A673 (cell line): ENCODE measurements at regions of chr6 and their contacts with region 1.

Region 1: DNA sequence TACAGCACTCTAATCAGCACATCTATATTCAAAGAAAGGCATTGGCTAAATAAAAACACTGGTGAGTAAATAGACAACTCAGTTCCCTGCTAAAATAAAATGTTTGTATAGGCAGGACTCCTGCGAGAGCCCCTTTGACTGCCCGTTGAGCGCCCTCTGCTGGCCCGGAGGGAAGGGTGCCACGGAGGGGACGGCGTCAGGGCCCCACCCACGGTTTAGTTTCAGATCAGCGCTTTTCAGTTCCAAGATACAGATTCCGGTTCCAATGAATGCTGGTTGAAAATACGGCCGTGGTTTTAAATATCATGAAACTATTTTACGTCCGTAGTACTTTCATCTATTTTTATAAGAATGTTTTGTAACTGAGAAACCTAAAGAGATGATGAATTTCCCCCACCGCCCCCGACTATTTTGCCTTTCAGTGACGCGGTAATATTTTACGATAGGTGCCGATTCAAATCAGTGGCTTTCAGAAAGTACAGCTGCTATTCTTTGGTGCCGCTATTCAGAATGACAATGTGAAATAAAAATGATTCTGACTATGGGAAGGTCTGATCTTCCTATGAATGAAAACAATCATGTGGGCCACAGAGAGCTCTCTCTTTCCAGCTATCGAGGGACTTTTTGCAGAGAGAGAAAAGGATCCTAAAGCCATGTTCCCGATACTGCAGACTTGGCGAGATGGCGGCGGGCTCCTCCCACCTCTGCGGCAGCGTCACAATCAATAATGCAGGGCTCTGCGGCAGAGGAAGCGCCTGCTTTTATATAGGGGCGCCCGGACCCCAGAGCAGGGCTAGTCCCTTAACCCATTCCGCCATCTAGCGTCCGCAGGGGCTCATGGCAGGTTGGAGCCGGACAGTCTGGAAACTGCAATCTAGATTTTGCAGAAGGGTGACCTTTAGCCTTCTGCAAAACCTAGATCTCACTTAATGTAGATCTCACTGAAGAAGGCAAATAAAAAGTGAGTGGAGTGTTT is 10.6 kb upstream of the CCN6 start:
- DNase-seq: peak; percentile 97
- H3K4me3 ChIP-seq: peak overlapping the region; percentile 63
- H3K27ac ChIP-seq: peak overlapping the region; percentile 84
- H3K4me1 ChIP-seq: no peaks in the 10 kb centered on the region
- H3K27me3 ChIP-seq: no peaks in the 10 kb centered on the region
- CTCF ChIP-seq: peak; percentile 97

Region 2: DNA sequence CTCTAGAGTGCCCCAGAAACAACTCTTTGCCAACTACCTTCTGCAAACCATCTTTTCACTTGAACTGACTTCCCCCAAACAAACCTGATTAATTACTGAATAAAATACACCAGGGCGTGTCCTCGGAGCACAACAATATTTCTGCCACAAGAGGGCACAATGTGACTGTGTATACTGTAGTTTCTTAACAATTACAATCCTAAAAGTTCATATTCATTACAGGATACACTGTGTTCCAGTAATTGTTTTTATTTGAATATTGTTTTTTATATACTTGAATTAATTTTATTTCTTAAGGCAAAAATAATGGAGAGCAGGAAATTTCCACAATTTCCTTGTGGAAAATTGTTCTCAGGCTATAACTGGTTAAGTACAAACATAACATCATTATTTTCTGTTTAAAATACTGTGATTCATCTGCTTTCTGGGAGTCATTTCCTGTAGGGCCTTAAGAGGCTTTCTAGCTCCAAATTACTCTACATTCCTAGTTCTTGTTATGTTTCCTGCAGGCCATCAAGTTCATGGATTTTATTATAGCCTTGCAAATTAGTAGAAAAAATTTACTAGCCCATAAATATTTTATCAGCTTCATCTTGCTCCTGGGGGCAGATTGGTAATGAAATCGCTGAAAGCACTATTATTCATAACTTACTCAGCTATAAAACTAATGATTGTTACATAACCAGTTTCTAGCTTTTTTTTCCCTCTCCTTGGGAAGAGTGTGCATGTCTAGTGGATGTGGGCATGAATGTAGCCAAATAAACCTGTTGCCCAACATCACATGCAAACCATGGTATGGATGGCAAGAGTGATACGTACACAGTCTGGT is 1515.0 kb before region 1 on chr6:
- CTCF ChIA-PET with region 1: no interaction called
- POLR2A ChIA-PET with region 1: no interaction called
- intact Hi-C with region 1: loop called (anchors 5 kb)
- DNase-seq: peak; percentile 95
- H3K4me3 ChIP-seq: no peak overlapping the region
- H3K27ac ChIP-seq: peak overlapping the region; percentile 3
- H3K4me1 ChIP-seq: peaks cover 21% of the 10 kb centered on the region
- H3K27me3 ChIP-seq: peaks cover 27% of the 10 kb centered on the region
- CTCF ChIP-seq: peak; percentile 93

Region 3: GRCh38 chr6:111259089-111259831 is 784.1 kb before region 1 on chr6:
- CTCF ChIA-PET with region 1: interaction called, 12 read pairs
- POLR2A ChIA-PET with region 1: no interaction called
- intact Hi-C with region 1: loop called (anchors 1 kb)
- DNase-seq: peak; percentile 99
- H3K4me3 ChIP-seq: peak overlapping the region; percentile 84
- H3K27ac ChIP-seq: peak overlapping the region; percentile 75
- H3K4me1 ChIP-seq: no peaks in the 10 kb centered on the region
- H3K27me3 ChIP-seq: no peaks in the 10 kb centered on the region
- CTCF ChIP-seq: peak; percentile 97

Region 4: GRCh38 chr6:111709615-111710398 is 333.5 kb before region 1 on chr6:
- CTCF ChIA-PET with region 1: interaction called, 8 read pairs
- POLR2A ChIA-PET with region 1: no interaction called
- intact Hi-C with region 1: loop called (anchors 1 kb)
- DNase-seq: peak; percentile 84
- H3K4me3 ChIP-seq: no peak overlapping the region
- H3K27ac ChIP-seq: no peak overlapping the region
- H3K4me1 ChIP-seq: no peaks in the 10 kb centered on the region
- H3K27me3 ChIP-seq: no peaks in the 10 kb centered on the region
- CTCF ChIP-seq: peak; percentile 76

Region 5: DNA sequence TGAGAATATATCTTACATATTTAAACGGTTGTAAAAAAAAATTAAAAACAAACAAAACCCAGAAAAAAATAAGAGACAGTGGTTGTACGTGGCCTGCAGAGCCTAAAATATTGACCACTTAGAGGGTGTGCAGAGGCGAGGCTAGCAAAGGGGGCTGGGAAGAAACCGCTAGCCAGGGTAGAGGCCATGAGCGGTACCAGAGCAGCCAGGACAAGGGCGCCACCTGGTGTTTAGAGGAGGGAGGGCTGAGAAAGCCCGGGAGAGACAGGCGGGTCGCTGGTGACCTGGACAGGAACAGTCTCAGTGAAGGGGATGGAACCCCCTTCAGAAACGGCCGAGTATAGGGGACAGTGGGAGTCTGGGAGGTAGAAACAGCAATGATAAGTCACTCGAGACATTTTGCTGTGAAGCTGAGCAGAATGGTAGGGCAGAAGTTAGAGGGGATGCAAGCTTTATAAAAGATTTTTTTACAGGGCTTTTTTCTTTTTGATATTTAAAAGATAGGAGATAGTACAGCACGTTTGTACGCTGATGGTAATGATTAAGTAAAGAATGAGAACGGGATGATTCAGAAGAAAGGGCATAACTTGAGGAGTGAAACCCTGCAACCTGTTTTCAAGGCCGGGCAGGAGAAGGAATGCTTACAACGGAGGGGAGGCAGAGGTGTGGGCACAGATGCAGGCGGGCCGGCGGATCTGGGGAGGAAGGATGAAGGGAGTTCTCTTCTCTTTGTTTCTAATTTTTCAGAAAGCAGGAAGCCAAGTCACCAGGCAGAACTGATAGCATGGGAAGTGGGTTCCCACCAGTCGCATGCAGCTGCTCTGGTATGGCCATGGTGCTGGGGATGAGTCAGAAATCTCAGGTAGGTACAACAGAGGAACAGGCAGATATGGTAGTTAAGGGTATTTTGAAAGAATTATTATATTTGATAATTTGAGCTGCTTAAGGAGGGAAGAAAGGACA is 120.3 kb after region 1 on chr6:
- CTCF ChIA-PET with region 1: no interaction called
- POLR2A ChIA-PET with region 1: no interaction called
- intact Hi-C with region 1: loop called (anchors 1 kb)
- DNase-seq: peak; percentile 69
- H3K4me3 ChIP-seq: no peak overlapping the region
- H3K27ac ChIP-seq: no peak overlapping the region
- H3K4me1 ChIP-seq: no peaks in the 10 kb centered on the region
- H3K27me3 ChIP-seq: peaks cover 23% of the 10 kb centered on the region
- CTCF ChIP-seq: peak; percentile 95